ENCODE measurements at regions of chr12 and their contacts with region 1.

Region 1: DNA sequence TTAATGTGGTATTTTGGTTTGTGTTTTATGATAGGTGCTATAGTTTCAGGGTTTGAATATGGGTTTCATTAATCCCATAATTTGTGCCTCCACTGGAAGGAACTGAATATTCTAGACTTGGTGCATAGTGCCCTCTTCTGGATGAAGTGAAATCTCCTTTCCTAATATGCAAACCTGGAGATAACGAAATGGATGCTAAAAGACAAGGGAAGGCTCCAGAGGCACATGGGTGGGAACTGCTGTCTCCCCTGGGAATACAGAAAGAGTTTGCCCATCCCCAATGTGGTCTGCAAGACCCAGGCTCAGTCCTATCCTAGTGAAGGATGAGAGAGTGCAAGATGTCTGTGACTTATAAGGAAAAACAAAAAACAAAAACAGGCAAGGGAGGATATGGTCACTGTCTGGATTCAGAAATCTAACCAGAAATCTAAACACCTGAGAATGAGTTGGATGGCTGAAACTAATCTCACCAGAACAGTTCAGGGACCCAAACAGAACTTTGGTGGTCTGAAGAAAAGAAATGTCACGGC is 142.3 kb upstream of the TMPO start:
- DNase-seq: no peak
- ATAC-seq: peak; percentile 87
- H3K4me3 ChIP-seq: no peak overlapping the region
- H3K27ac ChIP-seq: no peak overlapping the region
- H3K4me1 ChIP-seq: no peaks in the 10 kb centered on the region
- H3K27me3 ChIP-seq: no peaks in the 10 kb centered on the region; a peak in 1 of 4 replicates
- CTCF ChIP-seq: peak; percentile 56 to 77 (median 56); a peak in 5 of 6 replicates
- EP300 ChIP-seq: no peak
- POLR2A ChIP-seq: no peak
- RAD21 ChIP-seq: peak; percentile 83

Region 2: GRCh38 chr12:97148941-97149559 is 1224.0 kb before region 1 on chr12:
- CTCF ChIA-PET with region 1: interaction called, 6 read pairs
- POLR2A ChIA-PET with region 1: no interaction called
- RAD21 ChIA-PET with region 1: interaction called, 4 read pairs
- SMC1A ChIA-PET with region 1: interaction called, 4 read pairs
- in situ Hi-C with region 1: no loop called
- intact Hi-C with region 1: loop called (anchors 1 kb)
- DNase-seq: no peak
- ATAC-seq: peak; percentile 100
- H3K4me3 ChIP-seq: no peak overlapping the region
- H3K27ac ChIP-seq: no peak overlapping the region
- H3K4me1 ChIP-seq: no peaks in the 10 kb centered on the region
- H3K27me3 ChIP-seq: no peaks in the 10 kb centered on the region; a peak in 1 of 4 replicates
- CTCF ChIP-seq: peak; percentile 90 to 96 (median 90)
- EP300 ChIP-seq: no peak
- POLR2A ChIP-seq: no peak
- RAD21 ChIP-seq: peak; percentile 88

Region 3: DNA sequence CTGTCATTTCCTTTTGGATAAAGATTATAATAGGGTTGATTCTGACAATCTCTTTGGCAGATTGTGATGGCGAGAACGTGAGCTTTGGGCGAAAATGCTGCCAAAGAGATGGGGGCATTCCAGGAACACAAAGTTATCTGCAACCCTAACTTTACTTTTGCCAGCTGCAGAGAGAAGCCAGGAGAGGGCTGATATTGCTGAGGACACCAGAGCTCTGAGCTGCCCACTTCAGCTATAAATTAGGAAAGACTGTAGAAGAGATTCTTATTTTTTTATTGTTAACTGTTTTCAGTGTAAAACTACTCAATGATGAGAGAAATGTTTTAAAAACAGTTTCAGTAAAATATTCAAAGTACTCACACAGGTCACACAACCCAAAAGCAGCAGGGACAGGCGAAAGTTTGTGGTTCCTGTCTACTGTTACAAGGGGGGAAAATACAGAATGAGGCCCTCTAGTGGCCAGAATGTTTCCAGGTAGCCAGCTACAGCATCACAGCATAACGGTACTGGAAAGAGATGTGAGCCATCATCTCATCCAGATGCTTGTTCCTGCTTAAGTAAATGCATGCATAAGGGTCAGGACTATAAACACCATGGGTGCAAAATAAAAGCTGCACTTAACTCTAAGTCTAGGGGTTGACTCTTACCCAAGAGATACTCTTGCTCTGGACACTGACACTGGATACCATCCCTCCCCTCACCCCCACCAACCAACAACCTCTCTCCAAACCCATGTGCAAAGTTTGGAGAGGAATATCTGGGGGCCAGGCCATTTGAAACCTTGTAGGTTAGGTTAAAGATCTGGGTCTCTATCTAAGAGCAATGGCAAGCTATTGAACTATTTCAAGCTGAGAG is 412.1 kb before region 1 on chr12:
- CTCF ChIA-PET with region 1: interaction called, 14 read pairs
- POLR2A ChIA-PET with region 1: no interaction called
- RAD21 ChIA-PET with region 1: interaction called, 3 read pairs
- SMC1A ChIA-PET with region 1: interaction called, 12 read pairs
- in situ Hi-C with region 1: no loop called
- intact Hi-C with region 1: loop called (anchors 5 kb)
- DNase-seq: peak; percentile 3
- ATAC-seq: peak; percentile 96
- H3K4me3 ChIP-seq: no peak overlapping the region
- H3K27ac ChIP-seq: no peak overlapping the region
- H3K4me1 ChIP-seq: no peaks in the 10 kb centered on the region
- H3K27me3 ChIP-seq: no peaks in the 10 kb centered on the region
- CTCF ChIP-seq: peak; percentile 68 to 81 (median 80)
- EP300 ChIP-seq: no peak
- POLR2A ChIP-seq: no peak
- RAD21 ChIP-seq: peak; percentile 69

Region 4: GRCh38 chr12:98154850-98155249 is 218.2 kb before region 1 on chr12:
- CTCF ChIA-PET with region 1: interaction called, 5 read pairs
- POLR2A ChIA-PET with region 1: no interaction called
- RAD21 ChIA-PET with region 1: interaction called, 3 read pairs
- SMC1A ChIA-PET with region 1: interaction called, 3 read pairs
- in situ Hi-C with region 1: no loop called
- intact Hi-C with region 1: loop called (anchors 2 kb)
- DNase-seq: no peak
- ATAC-seq: peak; percentile 90
- H3K4me3 ChIP-seq: no peak overlapping the region
- H3K27ac ChIP-seq: no peak overlapping the region
- H3K4me1 ChIP-seq: no peaks in the 10 kb centered on the region
- H3K27me3 ChIP-seq: peaks cover 0 to 3% of the 10 kb centered on the region in 2 experiments; a peak in 1 of 4 replicates
- CTCF ChIP-seq: peak in 2 of 3 experiments; percentile 37 to 49; a peak in 2 of 6 replicates
- EP300 ChIP-seq: no peak
- POLR2A ChIP-seq: no peak
- RAD21 ChIP-seq: no peak

Region 5: GRCh38 chr12:98274430-98275130 is 98.5 kb before region 1 on chr12:
- CTCF ChIA-PET with region 1: no interaction called
- POLR2A ChIA-PET with region 1: no interaction called
- RAD21 ChIA-PET with region 1: no interaction called
- SMC1A ChIA-PET with region 1: no interaction called
- in situ Hi-C with region 1: no loop called
- intact Hi-C with region 1: loop called (anchors 5 kb)
- DNase-seq: peak; percentile 71
- ATAC-seq: peak; percentile 90
- H3K4me3 ChIP-seq: peak overlapping the region; percentile 18; the same call in 1 of the 2 replicates
- H3K27ac ChIP-seq: peak overlapping the region; percentile 50; the same call in 1 of the 2 replicates
- H3K4me1 ChIP-seq: peaks cover 15% of the 10 kb centered on the region
- H3K27me3 ChIP-seq: no peaks in the 10 kb centered on the region
- CTCF ChIP-seq: no peak
- EP300 ChIP-seq: peak; percentile 74 to 96; a peak in 3 of 4 replicates
- POLR2A ChIP-seq: no peak
- RAD21 ChIP-seq: no peak

Region 6: DNA sequence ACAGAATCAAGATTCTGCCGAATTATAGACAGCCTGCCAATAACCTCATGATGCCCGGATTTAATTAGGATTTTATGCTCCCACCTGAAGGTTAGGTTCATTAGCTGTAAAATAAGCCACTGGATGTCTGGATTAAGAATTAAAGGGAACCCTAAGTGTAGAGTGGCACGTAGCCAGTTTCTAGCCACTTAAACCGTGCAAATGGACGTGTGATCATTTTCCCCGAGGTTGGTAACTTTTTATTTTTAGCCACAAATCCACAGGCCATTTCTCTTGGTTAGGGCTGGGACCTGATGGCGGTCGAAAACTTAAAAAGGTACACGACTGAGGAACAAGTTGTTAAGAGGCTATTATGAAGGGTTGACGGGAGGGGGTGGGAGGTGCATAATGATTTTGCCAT is 15.0 kb after region 1 on chr12:
- CTCF ChIA-PET with region 1: interaction called, 11 read pairs
- POLR2A ChIA-PET with region 1: no interaction called
- RAD21 ChIA-PET with region 1: no interaction called
- SMC1A ChIA-PET with region 1: interaction called, 13 read pairs
- in situ Hi-C with region 1: no loop called
- intact Hi-C with region 1: no loop called
- DNase-seq: no peak
- ATAC-seq: no peak
- H3K4me3 ChIP-seq: no peak overlapping the region
- H3K27ac ChIP-seq: no peak overlapping the region
- H3K4me1 ChIP-seq: no peaks in the 10 kb centered on the region
- H3K27me3 ChIP-seq: peaks cover 0 to 3% of the 10 kb centered on the region in 2 experiments; a peak in 1 of 4 replicates
- CTCF ChIP-seq: no peak
- EP300 ChIP-seq: no peak
- POLR2A ChIP-seq: no peak
- RAD21 ChIP-seq: no peak

Measured in GM12878 (cell line).